CD14-positive monocyte (primary cell): ENCODE measurements at regions of chr12 and their contacts with region 1.

Region 1: DNA sequence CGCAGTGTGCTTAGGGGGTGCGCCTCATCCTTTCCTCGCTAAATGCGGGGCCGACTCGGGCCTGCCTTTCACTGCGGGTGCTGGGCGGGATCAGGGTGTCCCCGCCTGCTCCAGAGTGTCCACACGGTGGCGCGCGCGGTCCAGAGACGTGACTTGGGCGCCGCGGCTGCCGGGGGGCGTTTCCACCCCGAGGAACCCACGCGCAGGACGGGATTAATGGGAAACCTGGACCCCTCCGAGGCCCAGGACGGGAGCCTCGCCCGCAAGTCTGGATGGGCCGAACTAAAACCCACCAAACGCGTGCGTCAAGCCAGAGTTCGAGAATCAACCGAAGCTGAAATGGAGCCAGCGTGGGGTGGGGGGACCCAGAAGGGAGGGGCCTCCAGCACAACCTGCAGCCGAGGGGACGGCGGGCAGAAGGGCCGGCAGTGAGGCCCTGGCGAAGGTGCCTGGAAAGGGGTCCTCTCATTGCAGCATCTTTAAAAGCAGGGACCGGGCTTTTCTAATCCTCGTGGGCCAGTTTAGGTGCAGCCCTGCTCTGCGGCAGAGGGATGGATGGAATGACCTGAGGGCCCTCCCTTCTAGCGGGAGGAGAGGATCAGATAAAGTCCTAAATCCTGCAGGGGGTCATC is 93.3 kb downstream of the NINJ2 start:
- DNase-seq: peak; percentile 61 to 71 (median 67)
- H3K4me3 ChIP-seq: peak overlapping the region; percentile 13 to 69 (median 42)
- H3K4me3 Mint-ChIP-seq: peak overlapping the region; percentile 80 to 90
- H3K27ac ChIP-seq: no peak overlapping the region
- H3K27ac Mint-ChIP-seq: peak overlapping the region in 2 of 7 donors; percentile 10 to 40
- H3K4me1 ChIP-seq: peaks cover 11 to 16% of the 10 kb centered on the region in 2 donors
- H3K4me1 Mint-ChIP-seq: peaks cover 21% of the 10 kb centered on the region
- H3K27me3 ChIP-seq: no peaks in the 10 kb centered on the region
- H3K27me3 Mint-ChIP-seq: peaks cover 0 to 10% (median 0%) of the 10 kb centered on the region in 3 donors
- CTCF ChIP-seq: peak; percentile 92

Region 2: DNA sequence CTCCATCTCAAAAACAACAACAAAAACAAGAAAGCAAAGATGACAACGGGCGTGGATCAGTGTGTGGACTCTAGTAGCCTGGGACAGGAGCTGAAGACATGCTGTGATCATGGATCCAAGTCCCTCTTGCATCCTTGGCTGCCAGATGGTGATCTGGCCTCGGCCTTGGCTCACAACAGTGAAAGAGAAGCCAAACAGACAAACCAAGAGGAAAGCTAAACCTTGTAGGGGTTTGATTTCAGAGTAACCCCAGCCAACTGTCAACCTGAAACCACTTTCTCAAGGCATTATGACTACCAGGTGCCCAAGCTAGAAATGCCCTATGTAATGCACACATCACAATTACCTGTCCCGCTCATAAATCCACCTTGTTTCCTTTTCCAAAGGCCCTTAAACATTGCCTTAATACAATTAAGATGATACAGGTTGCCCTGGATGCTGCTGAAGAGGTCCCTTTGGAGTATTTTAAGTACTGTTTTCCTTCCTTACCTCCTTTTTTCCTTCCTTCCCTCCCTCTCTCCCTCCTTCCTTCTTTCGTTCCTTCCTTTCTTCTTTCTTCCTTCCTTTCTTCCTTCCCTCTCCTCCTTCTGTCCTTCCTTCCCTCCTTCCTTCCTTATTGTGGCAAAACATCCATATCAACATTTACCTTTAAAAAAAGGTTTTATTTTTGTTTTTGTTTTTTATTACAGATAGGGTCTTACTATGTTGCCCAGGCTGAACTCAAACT is 134.8 kb after region 1 on chr12:
- intact Hi-C with region 1: no loop called
- DNase-seq: no peak
- H3K4me3 ChIP-seq: no peak overlapping the region
- H3K4me3 Mint-ChIP-seq: no peak overlapping the region
- H3K27ac ChIP-seq: no peak overlapping the region
- H3K27ac Mint-ChIP-seq: peak overlapping the region in 1 of 7 donors; percentile 38
- H3K4me1 ChIP-seq: peaks cover 4 to 13% of the 10 kb centered on the region in 2 donors
- H3K4me1 Mint-ChIP-seq: peaks cover 10% of the 10 kb centered on the region
- H3K27me3 ChIP-seq: no peaks in the 10 kb centered on the region
- H3K27me3 Mint-ChIP-seq: peaks cover 0 to 4% (median 2%) of the 10 kb centered on the region in 3 donors
- CTCF ChIP-seq: no peak

Region 3: DNA sequence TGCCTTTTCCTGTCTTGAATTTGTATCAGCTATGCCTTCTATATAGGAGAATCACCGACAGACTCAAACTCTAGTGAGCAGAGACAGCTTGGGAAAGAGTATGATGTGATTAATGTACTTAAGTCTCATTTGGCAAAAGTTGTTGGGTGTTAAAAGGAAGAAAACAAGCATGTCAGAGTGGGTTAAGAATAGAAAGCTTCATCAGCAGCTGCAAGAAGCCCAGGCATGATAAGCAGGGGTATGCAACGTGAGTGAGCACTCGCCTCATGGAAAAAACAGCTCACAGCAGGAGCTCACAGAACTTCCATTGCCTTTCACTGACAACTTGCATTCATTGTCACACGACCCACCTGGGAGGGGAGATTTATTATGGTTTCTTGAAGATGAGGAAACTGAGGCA is 146.6 kb after region 1 on chr12:
- intact Hi-C with region 1: no loop called
- DNase-seq: no peak
- H3K4me3 ChIP-seq: no peak overlapping the region
- H3K4me3 Mint-ChIP-seq: no peak overlapping the region
- H3K27ac ChIP-seq: no peak overlapping the region
- H3K27ac Mint-ChIP-seq: no peak overlapping the region
- H3K4me1 ChIP-seq: peaks cover 15 to 23% of the 10 kb centered on the region in 2 donors
- H3K4me1 Mint-ChIP-seq: peaks cover 21% of the 10 kb centered on the region
- H3K27me3 ChIP-seq: no peaks in the 10 kb centered on the region
- H3K27me3 Mint-ChIP-seq: peaks cover 1 to 4% (median 1%) of the 10 kb centered on the region in 3 donors
- CTCF ChIP-seq: no peak

Region 4: GRCh38 chr12:810671-811415 is 240.9 kb after region 1 on chr12:
- intact Hi-C with region 1: loop called (anchors 2 to 5 kb)
- DNase-seq: no peak
- H3K4me3 ChIP-seq: no peak overlapping the region
- H3K4me3 Mint-ChIP-seq: no peak overlapping the region
- H3K27ac ChIP-seq: no peak overlapping the region
- H3K27ac Mint-ChIP-seq: peak overlapping the region in 2 of 7 donors; percentile 37 to 39
- H3K4me1 ChIP-seq: peaks cover 26 to 31% of the 10 kb centered on the region in 2 donors
- H3K4me1 Mint-ChIP-seq: peaks cover 31% of the 10 kb centered on the region
- H3K27me3 ChIP-seq: no peaks in the 10 kb centered on the region
- H3K27me3 Mint-ChIP-seq: no peaks in the 10 kb centered on the region
- CTCF ChIP-seq: no peak

Region 5: GRCh38 chr12:818733-819132 is 248.8 kb after region 1 on chr12:
- intact Hi-C with region 1: loop called (anchors 2 to 5 kb)
- DNase-seq: no peak
- H3K4me3 ChIP-seq: no peak overlapping the region
- H3K4me3 Mint-ChIP-seq: no peak overlapping the region
- H3K27ac ChIP-seq: no peak overlapping the region
- H3K27ac Mint-ChIP-seq: no peak overlapping the region
- H3K4me1 ChIP-seq: peaks cover 16 to 23% of the 10 kb centered on the region in 2 donors
- H3K4me1 Mint-ChIP-seq: peaks cover 29% of the 10 kb centered on the region
- H3K27me3 ChIP-seq: no peaks in the 10 kb centered on the region
- H3K27me3 Mint-ChIP-seq: no peaks in the 10 kb centered on the region
- CTCF ChIP-seq: peak; percentile 24

Region 6: DNA sequence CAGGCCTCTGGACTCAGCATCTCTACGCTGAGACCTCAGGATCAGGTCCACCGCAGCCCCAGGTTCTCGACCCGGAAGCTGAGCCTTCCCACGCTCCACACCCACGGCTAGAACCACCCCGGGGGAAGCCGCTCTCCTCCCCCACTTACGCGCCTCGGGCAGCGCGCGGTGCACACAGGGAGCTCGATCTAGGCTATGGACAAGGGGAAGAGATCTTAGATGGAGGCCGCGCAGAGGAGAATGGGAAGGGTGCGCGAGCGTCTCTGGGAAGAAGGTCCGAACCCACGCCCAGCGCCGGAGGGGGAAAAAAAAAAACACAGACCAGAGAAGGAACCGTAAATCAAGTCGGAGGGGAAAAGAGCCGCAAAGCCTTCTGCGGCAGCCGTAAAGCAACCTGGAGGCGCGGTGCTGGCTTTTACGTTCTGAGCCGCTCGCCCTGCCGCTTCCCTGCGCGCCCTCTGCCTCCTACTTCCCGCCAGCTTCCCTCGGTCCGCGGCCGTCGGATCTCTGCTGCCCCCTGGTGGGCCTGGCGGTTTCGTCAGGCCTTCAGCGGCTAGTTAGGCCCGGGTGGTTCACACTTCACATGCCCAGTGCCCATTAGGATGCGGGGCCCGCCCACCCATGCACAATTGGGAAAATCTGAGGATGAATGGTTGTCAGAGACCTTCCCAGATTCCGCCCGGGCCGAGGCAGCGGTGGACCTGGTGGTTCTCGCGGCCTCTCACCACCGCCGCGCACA is 379.7 kb after region 1 on chr12 and contains the start of gene RAD52:
- intact Hi-C with region 1: loop called in 1 of 2 experiments (anchors 10 kb)
- DNase-seq: peak; percentile 97 to 98 (median 97)
- H3K4me3 ChIP-seq: peak within 1 kb of the TSS; percentile 68 to 89 (median 85)
- H3K4me3 Mint-ChIP-seq: peak within 1 kb of the TSS; percentile 95 to 98
- H3K27ac ChIP-seq: peak within 1 kb of the TSS; percentile 91 to 93
- H3K27ac Mint-ChIP-seq: peak within 1 kb of the TSS; percentile 89 to 98 (median 94)
- H3K4me1 ChIP-seq: peaks cover 19 to 22% of the 10 kb centered on the region in 2 donors
- H3K4me1 Mint-ChIP-seq: peaks cover 33% of the 10 kb centered on the region
- H3K27me3 ChIP-seq: no peaks in the 10 kb centered on the region
- H3K27me3 Mint-ChIP-seq: no peaks in the 10 kb centered on the region
- CTCF ChIP-seq: peak; percentile 99
- polyA plus RNA-seq, gene RAD52: 0.79 to 14.3 (median 1.1) TPM

Region 7: DNA sequence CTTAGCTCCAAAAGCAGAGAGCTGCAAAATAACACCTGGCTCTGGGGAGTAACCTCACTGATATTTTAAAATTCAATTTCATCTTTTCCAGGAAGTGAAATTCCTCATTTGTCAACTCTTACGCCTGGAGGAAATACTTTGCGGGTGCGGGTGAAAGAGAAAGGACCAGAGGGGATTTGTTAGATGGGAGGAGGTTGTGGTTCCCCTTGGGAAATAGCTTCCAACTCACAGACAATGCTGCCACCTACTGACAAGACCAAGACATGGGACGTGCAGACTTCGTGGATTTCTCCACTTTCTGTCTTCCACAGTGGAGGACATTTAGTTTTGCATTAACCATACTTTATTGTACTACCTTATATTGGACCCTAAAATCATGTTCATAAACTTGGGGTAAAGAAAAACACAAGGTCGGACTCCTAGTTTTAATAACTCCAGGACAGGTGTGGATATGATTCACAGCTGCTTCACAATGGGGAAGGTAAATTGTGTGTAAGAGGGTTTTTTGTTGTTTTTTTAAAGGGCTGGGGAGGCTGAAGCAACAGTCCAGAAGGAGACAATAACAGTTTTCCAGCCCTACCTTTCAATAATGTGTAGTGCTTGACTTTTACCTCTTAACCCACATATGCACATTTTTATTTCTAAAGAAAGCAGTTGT is 1013.6 kb after region 1 on chr12:
- intact Hi-C with region 1: loop called in 1 of 2 experiments (anchors 10 kb)
- DNase-seq: peak; percentile 70 to 82 (median 81)
- H3K4me3 ChIP-seq: peak overlapping the region in 1 of 3 experiments; percentile 44
- H3K4me3 Mint-ChIP-seq: peak overlapping the region in 1 of 2 donors; percentile 76
- H3K27ac ChIP-seq: no peak overlapping the region
- H3K27ac Mint-ChIP-seq: no peak overlapping the region
- H3K4me1 ChIP-seq: peaks cover 4 to 8% of the 10 kb centered on the region in 2 donors
- H3K4me1 Mint-ChIP-seq: peaks cover 17% of the 10 kb centered on the region
- H3K27me3 ChIP-seq: no peaks in the 10 kb centered on the region
- H3K27me3 Mint-ChIP-seq: peaks cover 0 to 3% (median 2%) of the 10 kb centered on the region in 3 donors
- CTCF ChIP-seq: peak; percentile 92